Lower lobe of right lung (tissue), 2 donors: ENCODE measurements at regions of chr6 and their contacts with region 1.

Region 1: GRCh38 chr6:63764318-63764916 is 128.8 kb downstream of the PHF3 start:
- DNase-seq: no peak
- ATAC-seq: peak in 1 of 2 donors; percentile 46
- H3K4me3 ChIP-seq: no peak overlapping the region
- H3K27ac ChIP-seq: no peak overlapping the region
- H3K4me1 ChIP-seq: no peaks in the 10 kb centered on the region
- H3K27me3 ChIP-seq: no peaks in the 10 kb centered on the region
- CTCF ChIP-seq: peak; percentile 61

Region 2: DNA sequence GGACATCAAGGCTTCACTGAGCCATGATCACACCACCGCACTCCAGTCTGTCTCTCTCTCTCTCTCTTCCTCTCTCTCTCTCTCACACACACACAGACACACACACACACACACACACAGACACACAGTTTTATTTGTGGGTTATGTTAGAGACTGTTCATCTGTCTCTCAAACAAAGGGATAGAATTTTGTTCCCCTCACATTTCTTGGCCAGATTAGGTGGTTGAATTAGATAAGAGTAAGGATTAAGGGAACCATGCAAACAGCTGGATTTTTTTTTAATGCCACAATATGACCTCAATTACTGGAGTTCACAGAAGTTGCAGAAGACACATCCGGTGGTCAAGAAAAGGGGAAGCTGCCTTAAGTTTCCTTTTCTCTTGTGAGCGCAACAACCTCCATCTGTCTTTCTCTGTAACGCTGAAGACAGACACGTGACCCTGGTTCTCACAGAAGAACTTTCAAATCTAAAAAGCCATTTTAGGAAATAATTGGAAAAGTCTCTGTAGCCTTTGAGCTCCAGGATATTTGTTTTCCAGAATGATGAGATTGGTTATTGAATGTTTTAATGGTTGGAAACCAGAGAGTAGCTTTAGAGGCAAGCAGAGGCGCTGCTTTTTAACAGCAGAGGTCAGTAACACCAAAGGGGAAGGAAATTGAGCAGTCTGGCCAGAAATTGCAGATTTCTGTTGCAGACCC is 411.7 kb before region 1 on chr6:
- intact Hi-C with region 1: loop called (anchors 5 kb)
- DNase-seq: no peak
- ATAC-seq: peak; percentile 88 to 93
- H3K4me3 ChIP-seq: no peak overlapping the region
- H3K27ac ChIP-seq: peak overlapping the region; percentile 15
- H3K4me1 ChIP-seq: peaks cover 15% of the 10 kb centered on the region
- H3K27me3 ChIP-seq: no peaks in the 10 kb centered on the region
- CTCF ChIP-seq: peak; percentile 52

Region 3: DNA sequence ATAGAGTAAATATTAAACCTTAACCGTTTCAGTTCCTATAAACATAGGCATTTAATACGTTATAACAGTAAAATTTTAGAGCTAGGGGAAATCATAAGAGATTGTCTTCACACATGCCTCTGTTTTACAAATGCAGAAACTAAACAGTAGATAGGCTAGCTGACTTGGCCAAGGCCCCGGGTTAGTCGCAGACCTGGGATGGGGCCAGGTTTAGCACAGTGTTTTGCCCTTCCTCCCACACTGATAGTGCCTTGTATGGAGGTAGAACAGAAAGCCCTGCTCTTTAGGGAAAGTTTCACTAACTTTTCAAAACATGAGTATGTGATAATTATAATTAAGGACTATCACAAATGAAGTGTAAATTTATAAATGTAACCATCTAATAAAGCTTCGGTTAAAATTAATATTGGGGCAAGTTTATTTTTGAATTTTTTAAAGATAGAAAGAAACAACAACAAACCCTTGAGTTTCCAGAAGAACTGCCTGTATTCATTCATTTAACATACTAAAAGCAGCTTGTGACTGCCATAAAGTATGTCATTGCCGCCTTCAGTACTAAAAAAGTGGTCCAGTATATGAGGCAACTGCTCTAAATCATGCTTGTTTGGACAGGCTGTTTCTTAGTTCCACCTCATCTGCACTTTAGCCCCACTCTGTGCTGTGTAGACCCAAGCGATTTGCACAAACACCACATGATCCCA is 254.6 kb before region 1 on chr6:
- intact Hi-C with region 1: no loop called
- DNase-seq: no peak
- ATAC-seq: peak; percentile 82 to 93
- H3K4me3 ChIP-seq: no peak overlapping the region
- H3K27ac ChIP-seq: no peak overlapping the region
- H3K4me1 ChIP-seq: no peaks in the 10 kb centered on the region
- H3K27me3 ChIP-seq: no peaks in the 10 kb centered on the region
- CTCF ChIP-seq: no peak

Region 4: GRCh38 chr6:63600136-63600535 is 164.3 kb before region 1 on chr6:
- intact Hi-C with region 1: loop called (anchors 5 kb)
- DNase-seq: no peak
- ATAC-seq: no peak
- H3K4me3 ChIP-seq: no peak overlapping the region
- H3K27ac ChIP-seq: no peak overlapping the region
- H3K4me1 ChIP-seq: peaks cover 8% of the 10 kb centered on the region
- H3K27me3 ChIP-seq: no peaks in the 10 kb centered on the region
- CTCF ChIP-seq: no peak